ENCODE measurements at regions of chr4 and their contacts with region 1.

Region 1: GRCh38 chr4:143581331-143581946 is 67.9 kb downstream of the SMARCA5 start:
- DNase-seq: no peak
- H3K4me3 ChIP-seq: no peak overlapping the region
- H3K27ac ChIP-seq: no peak overlapping the region
- H3K4me1 ChIP-seq: no peaks in the 10 kb centered on the region
- H3K27me3 ChIP-seq: no peaks in the 10 kb centered on the region
- CTCF ChIP-seq: no peak
- EP300 ChIP-seq: no peak
- POLR2A ChIP-seq: no peak

Region 2: DNA sequence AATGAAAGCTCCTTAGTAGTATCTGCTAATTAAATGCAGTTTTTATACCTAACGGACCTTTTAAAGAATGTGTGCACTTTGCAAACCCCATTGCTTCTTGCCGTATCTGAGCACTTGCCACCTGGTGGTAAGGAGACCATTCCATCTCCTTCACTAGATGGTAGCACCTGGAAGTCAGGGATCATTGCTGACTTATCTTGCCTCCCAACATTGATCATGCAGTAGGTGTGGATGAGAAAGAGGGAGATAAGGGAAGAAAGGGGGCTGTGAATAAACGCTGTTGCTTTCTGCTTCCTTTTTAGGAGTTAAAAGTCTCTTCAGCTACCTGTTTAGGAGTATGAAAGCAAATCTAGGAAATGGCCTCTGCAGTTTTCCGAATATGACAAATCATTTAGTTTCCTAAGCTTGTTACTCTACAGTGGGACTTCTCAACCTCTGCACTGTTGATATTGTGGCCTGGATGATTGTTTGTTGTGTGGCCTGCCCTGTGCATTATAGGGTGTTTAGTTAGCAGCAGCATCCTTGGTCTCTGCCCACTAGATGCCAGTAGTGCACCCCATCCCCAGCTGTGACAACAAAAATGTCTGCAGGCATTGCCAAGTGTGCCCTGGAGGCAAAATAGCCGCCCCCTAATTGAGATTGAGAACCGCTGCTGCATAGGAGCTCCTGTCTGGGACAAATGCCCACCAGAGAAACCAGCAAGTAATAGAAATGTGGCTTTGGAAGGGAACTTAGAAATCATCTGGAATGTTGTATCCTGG is 205.9 kb before region 1 on chr4:
- in situ Hi-C with region 1: no loop called
- intact Hi-C with region 1: no loop called
- DNase-seq: peak; percentile 43
- H3K4me3 ChIP-seq: no peak overlapping the region
- H3K27ac ChIP-seq: peak overlapping the region in 3 of 4 donors; percentile 21 to 81 (median 79)
- H3K4me1 ChIP-seq: peaks cover 40 to 65% (median 49%) of the 10 kb centered on the region in 4 donors
- H3K27me3 ChIP-seq: no peaks in the 10 kb centered on the region
- CTCF ChIP-seq: peak; percentile 16 to 36 (median 29)
- EP300 ChIP-seq: no peak
- POLR2A ChIP-seq: no peak

Region 3: GRCh38 chr4:144518181-144518902 is 936.9 kb after region 1 on chr4:
- in situ Hi-C with region 1: no loop called
- intact Hi-C with region 1: loop called (anchors 5 kb)
- DNase-seq: no peak
- H3K4me3 ChIP-seq: no peak overlapping the region
- H3K27ac ChIP-seq: no peak overlapping the region
- H3K4me1 ChIP-seq: no peaks in the 10 kb centered on the region
- H3K27me3 ChIP-seq: no peaks in the 10 kb centered on the region
- CTCF ChIP-seq: no peak
- EP300 ChIP-seq: no peak
- POLR2A ChIP-seq: no peak

Region 4: GRCh38 chr4:144634978-144635747 is 1053.7 kb after region 1 on chr4:
- in situ Hi-C with region 1: no loop called
- intact Hi-C with region 1: no loop called
- DNase-seq: no peak
- H3K4me3 ChIP-seq: no peak overlapping the region
- H3K27ac ChIP-seq: no peak overlapping the region
- H3K4me1 ChIP-seq: no peaks in the 10 kb centered on the region
- H3K27me3 ChIP-seq: no peaks in the 10 kb centered on the region
- CTCF ChIP-seq: no peak
- EP300 ChIP-seq: no peak
- POLR2A ChIP-seq: no peak

Measured in transverse colon (tissue), 4 donors.